ENCODE measurements at regions of chr7 and their contacts with region 1.

Region 1: GRCh38 chr7:149284850-149285626 is 23.0 kb downstream of the ZNF783 start:
- DNase-seq: peak; percentile 98 to 100
- H3K4me3 ChIP-seq: peak overlapping the region; percentile 76
- H3K4me3 Mint-ChIP-seq: peak overlapping the region; percentile 81
- H3K27ac Mint-ChIP-seq: peak overlapping the region; percentile 69
- H3K4me1 ChIP-seq: no peaks in the 10 kb centered on the region
- H3K4me1 Mint-ChIP-seq: peaks cover 8% of the 10 kb centered on the region
- H3K27me3 ChIP-seq: no peaks in the 10 kb centered on the region
- H3K27me3 Mint-ChIP-seq: no peaks in the 10 kb centered on the region
- CTCF ChIP-seq: peak in 1 of 2 experiments; percentile 42

Region 2: GRCh38 chr7:149239345-149240191 is 45.5 kb before region 1 on chr7 and contains the start of gene ZNF212:
- CTCF ChIA-PET with region 1: no interaction called
- POLR2A ChIA-PET with region 1: no interaction called
- intact Hi-C with region 1: loop called (anchors 2 kb)
- DNase-seq: peak; percentile 91 to 95
- H3K4me3 ChIP-seq: peak within 1 kb of the TSS; percentile 99
- H3K4me3 Mint-ChIP-seq: peak within 1 kb of the TSS; percentile 92
- H3K27ac Mint-ChIP-seq: peak within 1 kb of the TSS; percentile 89
- H3K4me1 ChIP-seq: peaks cover 6% of the 10 kb centered on the region
- H3K4me1 Mint-ChIP-seq: peaks cover 7% of the 10 kb centered on the region
- H3K27me3 ChIP-seq: no peaks in the 10 kb centered on the region
- H3K27me3 Mint-ChIP-seq: no peaks in the 10 kb centered on the region
- CTCF ChIP-seq: peak; percentile 72 to 96
- total RNA-seq, gene ZNF212: 15.9 and 18.6 TPM in 2 replicates

Region 3: GRCh38 chr7:149330914-149331567 is 46.0 kb after region 1 on chr7:
- CTCF ChIA-PET with region 1: no interaction called
- POLR2A ChIA-PET with region 1: no interaction called
- intact Hi-C with region 1: no loop called
- DNase-seq: peak in 1 of 2 experiments; percentile 8
- H3K4me3 ChIP-seq: no peak overlapping the region
- H3K4me3 Mint-ChIP-seq: no peak overlapping the region
- H3K27ac Mint-ChIP-seq: no peak overlapping the region
- H3K4me1 ChIP-seq: no peaks in the 10 kb centered on the region
- H3K4me1 Mint-ChIP-seq: peaks cover 5% of the 10 kb centered on the region
- H3K27me3 ChIP-seq: no peaks in the 10 kb centered on the region
- H3K27me3 Mint-ChIP-seq: no peaks in the 10 kb centered on the region
- CTCF ChIP-seq: no peak

Region 4: DNA sequence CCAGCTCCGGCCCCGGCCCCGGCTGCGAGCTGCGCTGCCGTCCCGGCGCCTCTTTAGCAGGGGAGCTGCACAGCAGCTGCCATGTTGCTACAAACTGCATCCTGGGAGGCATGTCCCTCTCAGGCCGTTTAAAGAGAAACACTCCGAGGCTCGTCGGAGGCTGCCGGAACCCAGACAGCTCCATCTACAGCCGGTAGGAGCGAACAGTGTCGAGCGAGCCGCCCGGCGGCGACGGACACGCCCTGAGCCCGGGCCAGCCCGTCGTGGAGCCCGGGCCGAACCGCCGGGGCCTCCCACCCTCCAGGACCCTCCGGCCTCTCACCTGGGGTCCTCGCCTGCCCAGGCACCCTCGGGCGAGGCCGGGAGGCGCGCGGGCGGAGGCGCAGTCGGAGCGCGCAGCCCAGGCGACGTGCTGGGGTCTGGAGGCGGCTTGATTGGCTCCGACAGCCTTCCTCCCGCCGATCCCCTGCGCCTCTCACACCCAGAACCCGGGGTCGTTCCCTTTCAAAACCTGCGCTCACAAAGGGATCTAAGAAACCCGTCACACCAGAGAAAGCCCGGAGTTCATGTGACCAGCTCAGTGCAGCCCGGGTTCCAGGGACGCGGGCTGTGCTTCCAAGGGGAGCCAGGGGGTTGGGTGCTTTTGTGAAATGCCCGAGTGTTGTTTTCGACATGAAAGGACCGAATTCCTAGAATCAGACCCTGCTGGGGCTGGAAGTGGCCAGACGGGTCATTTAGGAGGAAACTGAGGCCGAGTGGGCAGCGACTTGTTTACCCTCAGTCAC is 175.6 kb after region 1 on chr7 and contains the start of gene ZNF777:
- CTCF ChIA-PET with region 1: interaction called, 14 read pairs
- POLR2A ChIA-PET with region 1: no interaction called
- intact Hi-C with region 1: no loop called
- DNase-seq: peak; percentile 86 to 88
- H3K4me3 ChIP-seq: peak within 1 kb of the TSS; percentile 78
- H3K4me3 Mint-ChIP-seq: peak within 1 kb of the TSS; percentile 76
- H3K27ac Mint-ChIP-seq: peak within 1 kb of the TSS; percentile 36
- H3K4me1 ChIP-seq: no peaks in the 10 kb centered on the region
- H3K4me1 Mint-ChIP-seq: peaks cover 7% of the 10 kb centered on the region
- H3K27me3 ChIP-seq: no peaks in the 10 kb centered on the region
- H3K27me3 Mint-ChIP-seq: peaks cover 6% of the 10 kb centered on the region
- CTCF ChIP-seq: peak; percentile 32 to 50
- total RNA-seq, gene ZNF777: 20.8 and 22.7 TPM in 2 replicates

Region 5: GRCh38 chr7:149497456-149498261 is 212.6 kb after region 1 on chr7 and contains the start of gene ZNF746:
- CTCF ChIA-PET with region 1: no interaction called
- POLR2A ChIA-PET with region 1: no interaction called
- intact Hi-C with region 1: loop called (anchors 1 kb)
- DNase-seq: peak; percentile 83 to 91
- H3K4me3 ChIP-seq: peak within 1 kb of the TSS; percentile 80
- H3K4me3 Mint-ChIP-seq: peak within 1 kb of the TSS; percentile 90
- H3K27ac Mint-ChIP-seq: peak within 1 kb of the TSS; percentile 66
- H3K4me1 ChIP-seq: peaks cover 8% of the 10 kb centered on the region; the same call in 1 of the 2 replicates
- H3K4me1 Mint-ChIP-seq: peaks cover 20% of the 10 kb centered on the region
- H3K27me3 ChIP-seq: no peaks in the 10 kb centered on the region
- H3K27me3 Mint-ChIP-seq: no peaks in the 10 kb centered on the region
- CTCF ChIP-seq: peak; percentile 50 to 59
- total RNA-seq, gene ZNF746: 19.1 and 19.3 TPM in 2 replicates

Region 6: GRCh38 chr7:149624419-149625339 is 339.6 kb after region 1 on chr7:
- CTCF ChIA-PET with region 1: interaction called, 11 read pairs
- POLR2A ChIA-PET with region 1: no interaction called
- intact Hi-C with region 1: no loop called
- DNase-seq: peak; percentile 94 to 97
- H3K4me3 ChIP-seq: peak overlapping the region; percentile 89
- H3K4me3 Mint-ChIP-seq: peak overlapping the region; percentile 99
- H3K27ac Mint-ChIP-seq: peak overlapping the region; percentile 90
- H3K4me1 ChIP-seq: peaks cover 4% of the 10 kb centered on the region; the same call in 1 of the 2 replicates
- H3K4me1 Mint-ChIP-seq: peaks cover 6% of the 10 kb centered on the region
- H3K27me3 ChIP-seq: no peaks in the 10 kb centered on the region
- H3K27me3 Mint-ChIP-seq: no peaks in the 10 kb centered on the region
- CTCF ChIP-seq: peak; percentile 86 to 96